ENCODE measurements at regions of chr1 and their contacts with region 1.

Region 1: GRCh38 chr1:70410604-70411359 is at the start of gene CTH:
- DNase-seq: peak; percentile 84 to 96 (median 92)
- ATAC-seq: peak; percentile 91 to 93
- H3K4me3 Mint-ChIP-seq: peak within 1 kb of the TSS; percentile 89 to 99 (median 96)
- H3K27ac Mint-ChIP-seq: peak within 1 kb of the TSS; percentile 87 to 99 (median 97)
- H3K4me1 Mint-ChIP-seq: peaks cover 7 to 25% (median 24%) of the 10 kb centered on the region in 4 donors
- H3K27me3 Mint-ChIP-seq: peaks cover 0 to 11% (median 0%) of the 10 kb centered on the region in 5 donors
- polyA plus RNA-seq, gene CTH: 2.7 to 4.0 (median 3.1) TPM

Region 2: DNA sequence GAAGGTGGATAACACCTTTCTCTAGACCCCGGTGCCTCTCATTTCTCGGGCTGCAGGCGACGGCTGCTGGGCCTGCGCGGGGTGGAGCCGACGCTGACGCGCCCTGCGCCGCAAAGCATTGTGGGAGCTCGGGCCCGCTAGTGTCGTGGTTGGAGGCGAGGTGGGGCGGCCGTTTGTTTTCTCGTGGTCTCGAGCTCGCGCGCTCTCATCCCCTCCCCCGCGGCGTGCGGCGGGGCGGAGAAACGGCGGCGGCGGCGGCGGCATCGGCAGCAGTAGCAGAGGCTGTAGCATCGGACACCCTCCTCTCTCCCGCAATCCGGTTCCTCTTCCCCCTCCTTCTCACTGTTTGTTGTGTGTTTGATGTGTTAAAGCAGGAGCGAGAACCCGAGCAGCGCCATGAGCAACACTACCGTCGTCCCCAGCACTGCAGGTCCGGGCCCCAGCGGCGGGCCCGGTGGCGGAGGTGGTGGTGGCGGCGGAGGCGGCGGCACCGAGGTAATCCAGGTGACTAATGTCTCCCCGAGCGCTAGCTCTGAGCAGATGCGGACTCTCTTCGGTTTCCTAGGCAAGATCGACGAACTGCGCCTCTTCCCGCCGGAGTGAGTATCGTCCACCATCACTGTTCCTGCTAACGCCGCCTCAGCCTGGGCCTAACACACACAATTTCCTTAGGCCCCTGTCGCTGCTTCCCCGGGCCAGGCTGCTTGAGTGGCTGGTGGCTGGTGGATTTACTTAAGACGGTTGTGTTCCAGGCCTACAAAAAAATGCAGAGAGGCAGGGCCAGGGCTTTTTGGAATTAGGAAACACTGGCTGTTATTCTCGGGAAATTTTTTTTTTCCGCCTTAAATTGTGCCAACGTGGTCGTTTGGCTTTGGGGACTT is 189.3 kb before region 1 on chr1 and contains the start of gene SRSF11:
- POLR2A ChIA-PET with region 1: interaction called, 16 read pairs
- DNase-seq: peak; percentile 93 to 98 (median 96)
- ATAC-seq: peak; percentile 92 to 94
- H3K4me3 Mint-ChIP-seq: peak within 1 kb of the TSS; percentile 78 to 95 (median 92)
- H3K27ac Mint-ChIP-seq: peak within 1 kb of the TSS; percentile 89 to 98 (median 98)
- H3K4me1 Mint-ChIP-seq: peaks cover 11 to 57% (median 39%) of the 10 kb centered on the region in 4 donors
- H3K27me3 Mint-ChIP-seq: no peaks in the 10 kb centered on the region
- polyA plus RNA-seq, gene SRSF11: 75.7 to 94.6 (median 89.1) TPM

Region 3: GRCh38 chr1:70354332-70355110 is 56.3 kb before region 1 on chr1 and contains the start of gene ANKRD13C:
- POLR2A ChIA-PET with region 1: interaction called, 69 read pairs
- DNase-seq: peak; percentile 75 to 98 (median 92)
- ATAC-seq: peak; percentile 86 to 91
- H3K4me3 Mint-ChIP-seq: peak within 1 kb of the TSS; percentile 91 to 99 (median 98)
- H3K27ac Mint-ChIP-seq: peak within 1 kb of the TSS; percentile 94 to 100 (median 99)
- H3K4me1 Mint-ChIP-seq: peaks cover 19 to 53% (median 41%) of the 10 kb centered on the region in 4 donors
- H3K27me3 Mint-ChIP-seq: no peaks in the 10 kb centered on the region
- polyA plus RNA-seq, gene ANKRD13C: 9.2 to 14.9 (median 10.5) TPM

Region 4: GRCh38 chr1:71080739-71081696 is 670.2 kb after region 1 on chr1 and contains the start of gene ZRANB2:
- POLR2A ChIA-PET with region 1: interaction called, 10 read pairs
- DNase-seq: peak; percentile 78 to 98 (median 91)
- ATAC-seq: peak; percentile 96 to 97
- H3K4me3 Mint-ChIP-seq: peak within 1 kb of the TSS; percentile 89 to 99 (median 96)
- H3K27ac Mint-ChIP-seq: peak within 1 kb of the TSS; percentile 97 to 100 (median 99)
- H3K4me1 Mint-ChIP-seq: peaks cover 5 to 40% (median 25%) of the 10 kb centered on the region in 4 donors
- H3K27me3 Mint-ChIP-seq: peaks cover 9 to 27% (median 19%) of the 10 kb centered on the region in 5 donors
- polyA plus RNA-seq, gene ZRANB2: 40.9 to 67.7 (median 63.3) TPM